Caco-2 (cell line): ENCODE measurements at regions of chr1 and their contacts with region 1.

Region 1: GRCh38 chr1:58841455-58841854 is 57.6 kb upstream of the JUN start:
- DNase-seq: peak in 1 of 2 experiments; percentile 12
- H3K4me3 ChIP-seq: no peak overlapping the region
- H3K4me3 Mint-ChIP-seq: no peak overlapping the region
- H3K27ac Mint-ChIP-seq: no peak overlapping the region
- H3K4me1 ChIP-seq: peaks cover 16% of the 10 kb centered on the region
- H3K4me1 Mint-ChIP-seq: peaks cover 8% of the 10 kb centered on the region
- H3K27me3 ChIP-seq: no peaks in the 10 kb centered on the region
- H3K27me3 Mint-ChIP-seq: no peaks in the 10 kb centered on the region
- CTCF ChIP-seq: no peak

Region 2: GRCh38 chr1:58442114-58442513 is 399.3 kb before region 1 on chr1:
- CTCF ChIA-PET with region 1: no interaction called
- POLR2A ChIA-PET with region 1: no interaction called
- intact Hi-C with region 1: no loop called
- DNase-seq: no peak
- H3K4me3 ChIP-seq: no peak overlapping the region
- H3K4me3 Mint-ChIP-seq: no peak overlapping the region
- H3K27ac Mint-ChIP-seq: no peak overlapping the region
- H3K4me1 ChIP-seq: no peaks in the 10 kb centered on the region
- H3K4me1 Mint-ChIP-seq: peaks cover 7% of the 10 kb centered on the region
- H3K27me3 ChIP-seq: no peaks in the 10 kb centered on the region
- H3K27me3 Mint-ChIP-seq: no peaks in the 10 kb centered on the region
- CTCF ChIP-seq: no peak

Region 3: GRCh38 chr1:58870296-58870676 is 28.8 kb after region 1 on chr1:
- CTCF ChIA-PET with region 1: no interaction called
- POLR2A ChIA-PET with region 1: no interaction called
- intact Hi-C with region 1: loop called (anchors 1 kb)
- DNase-seq: peak; percentile 59 to 65
- H3K4me3 ChIP-seq: no peak overlapping the region
- H3K4me3 Mint-ChIP-seq: no peak overlapping the region
- H3K27ac Mint-ChIP-seq: no peak overlapping the region
- H3K4me1 ChIP-seq: peaks cover 5% of the 10 kb centered on the region; the same call in 1 of the 2 replicates
- H3K4me1 Mint-ChIP-seq: no peaks in the 10 kb centered on the region
- H3K27me3 ChIP-seq: no peaks in the 10 kb centered on the region
- H3K27me3 Mint-ChIP-seq: no peaks in the 10 kb centered on the region
- CTCF ChIP-seq: no peak